ENCODE measurements at regions of chr19 and their contacts with region 1.

Region 1: DNA sequence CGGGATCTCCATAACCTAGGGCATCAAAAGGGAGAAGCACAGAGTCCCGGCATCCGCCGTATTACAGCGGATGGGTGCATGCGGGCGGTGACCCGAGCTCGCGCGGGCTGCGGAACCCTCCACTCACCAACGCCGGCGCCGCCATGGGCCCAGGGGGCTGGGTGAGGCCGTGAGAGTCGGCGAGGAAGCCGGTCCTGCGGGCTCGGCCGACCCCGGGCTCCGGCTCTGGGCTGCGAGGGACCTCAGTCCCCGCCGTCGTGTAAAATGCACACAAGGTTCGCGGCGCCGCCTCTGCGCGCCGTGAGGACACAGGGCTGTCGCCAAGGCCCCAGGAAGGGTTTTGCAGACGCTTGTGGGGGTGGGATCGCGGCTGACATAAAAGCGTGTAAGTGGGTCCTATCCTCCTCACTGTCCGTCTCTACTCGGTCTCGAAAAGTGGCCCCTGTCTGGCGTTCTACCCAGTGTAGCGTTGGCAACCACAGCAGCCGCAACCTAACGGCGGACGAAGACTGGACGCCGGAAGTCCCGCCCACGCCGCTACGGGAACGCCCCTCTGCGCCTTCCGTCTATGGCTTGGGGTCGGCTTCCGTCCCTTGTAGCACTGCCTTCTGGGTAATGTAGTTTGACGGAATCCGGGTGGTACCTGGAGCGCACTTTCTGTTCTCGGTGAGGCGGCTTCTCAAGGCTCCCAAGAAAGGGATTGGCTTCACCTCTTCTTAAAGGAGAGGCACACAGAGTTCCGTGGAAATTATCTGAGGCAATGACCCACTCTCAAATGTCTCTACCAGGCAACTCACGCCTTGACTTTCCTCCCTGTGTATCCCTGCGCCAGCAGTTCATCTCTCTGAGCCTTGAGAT is at the start of gene ZNF599:
- DNase-seq: peak; percentile 93
- H3K4me3 Mint-ChIP-seq: peak within 1 kb of the TSS; percentile 89
- H3K27ac Mint-ChIP-seq: peak within 1 kb of the TSS; percentile 78
- H3K4me1 Mint-ChIP-seq: peaks cover 16% of the 10 kb centered on the region
- H3K27me3 Mint-ChIP-seq: no peaks in the 10 kb centered on the region
- total RNA-seq, gene ZNF599: 3.2 to 3.7 TPM

Region 2: DNA sequence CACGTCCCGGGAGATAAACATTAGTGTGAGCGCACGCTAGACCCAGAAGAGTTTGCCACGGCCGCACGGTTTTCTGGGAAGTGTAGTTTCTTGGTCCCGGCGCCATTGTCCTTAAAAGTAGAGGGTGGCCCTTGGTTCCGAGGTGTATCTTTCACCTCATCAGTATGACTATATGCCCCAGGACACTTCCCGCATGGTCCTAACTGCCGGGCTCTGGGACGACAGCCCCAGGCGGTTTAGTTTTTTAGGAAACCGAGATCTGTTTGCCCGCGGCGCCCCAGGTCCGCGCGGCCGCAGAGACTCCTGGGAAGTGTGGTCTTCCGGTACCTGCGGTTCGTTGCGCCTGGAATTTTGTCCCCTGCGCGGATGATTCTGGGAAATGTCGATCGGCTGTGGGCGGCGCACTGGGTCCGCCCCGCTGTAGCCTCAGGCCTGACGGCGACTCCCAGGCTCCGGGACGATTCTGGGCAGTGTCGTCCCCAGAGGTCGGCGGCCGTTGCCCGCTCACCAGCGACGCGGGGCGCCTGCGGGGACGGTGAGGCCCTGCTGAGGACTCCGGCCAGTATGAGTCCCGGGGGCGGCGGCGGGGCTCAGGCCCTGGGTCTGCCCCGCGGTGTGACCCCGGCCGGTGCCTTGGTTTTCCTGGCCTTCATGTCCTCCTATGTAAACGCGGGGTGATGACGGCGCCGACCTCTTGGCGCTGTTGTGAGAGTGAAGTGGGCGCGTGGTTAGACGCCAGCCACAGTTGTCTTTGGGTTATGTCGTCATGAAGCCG is 38.9 kb before region 1 on chr19 and contains the start of gene ZNF181:
- CTCF ChIA-PET with region 1: interaction called, 3 read pairs
- POLR2A ChIA-PET with region 1: interaction called, 4 read pairs
- intact Hi-C with region 1: loop called (anchors 1 kb)
- DNase-seq: peak; percentile 89
- H3K4me3 Mint-ChIP-seq: peak within 1 kb of the TSS; percentile 86
- H3K27ac Mint-ChIP-seq: peak within 1 kb of the TSS; percentile 97
- H3K4me1 Mint-ChIP-seq: peaks cover 19% of the 10 kb centered on the region
- H3K27me3 Mint-ChIP-seq: peaks cover 1% of the 10 kb centered on the region
- total RNA-seq, gene ZNF181: 4.2 to 4.6 TPM